Activated CD4-positive, alpha-beta T cell treated with anti-CD3 and anti-CD28 coated beads for 36 hours (primary cell): ENCODE measurements at regions of chr11 and their contacts with region 1.

Region 1: GRCh38 chr11:14643697-14644225 is at the start of gene PDE3B:
- DNase-seq: peak; percentile 88
- ATAC-seq: peak; percentile 76
- H3K4me3 Mint-ChIP-seq: peak within 1 kb of the TSS; percentile 75
- H3K27ac Mint-ChIP-seq: peak within 1 kb of the TSS; percentile 89
- H3K4me1 Mint-ChIP-seq: peaks cover 46% of the 10 kb centered on the region
- H3K27me3 Mint-ChIP-seq: no peaks in the 10 kb centered on the region
- total RNA-seq, gene PDE3B: 24.7 to 25.8 TPM

Region 2: GRCh38 chr11:14519917-14520746 is 123.6 kb before region 1 on chr11 and contains the start of gene PSMA1:
- CTCF ChIA-PET with region 1: no interaction called
- POLR2A ChIA-PET with region 1: interaction called, 7 read pairs
- intact Hi-C with region 1: loop called (anchors 1 kb)
- DNase-seq: peak; percentile 98
- ATAC-seq: peak; percentile 87
- H3K4me3 Mint-ChIP-seq: peak within 1 kb of the TSS; percentile 93
- H3K27ac Mint-ChIP-seq: peak within 1 kb of the TSS; percentile 95
- H3K4me1 Mint-ChIP-seq: peaks cover 25% of the 10 kb centered on the region
- H3K27me3 Mint-ChIP-seq: no peaks in the 10 kb centered on the region
- total RNA-seq, gene PSMA1: 231 to 330 TPM

Region 3: DNA sequence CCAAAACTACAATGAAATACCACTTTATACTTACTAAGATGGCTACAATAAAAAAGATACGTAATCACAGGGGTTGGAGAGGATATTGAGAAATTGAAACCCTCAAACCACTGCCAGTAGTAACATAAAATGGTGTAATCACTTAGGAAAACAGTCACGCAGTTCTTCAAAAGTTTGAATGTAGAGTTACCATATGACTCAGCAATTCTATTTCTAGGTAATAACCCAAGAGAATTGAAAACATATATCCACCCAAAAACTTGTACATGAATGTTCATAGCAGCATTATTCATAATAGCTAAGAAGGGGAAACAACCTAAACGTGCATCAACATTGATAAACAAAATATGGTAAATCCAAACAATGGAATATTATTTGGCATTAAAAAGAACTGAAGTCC is 99.2 kb before region 1 on chr11:
- CTCF ChIA-PET with region 1: interaction called, 11 read pairs
- POLR2A ChIA-PET with region 1: no interaction called
- intact Hi-C with region 1: loop called (anchors 1 kb)
- DNase-seq: no peak
- ATAC-seq: peak; percentile 79
- H3K4me3 Mint-ChIP-seq: no peak overlapping the region
- H3K27ac Mint-ChIP-seq: peak overlapping the region; percentile 72
- H3K4me1 Mint-ChIP-seq: peaks cover 40% of the 10 kb centered on the region
- H3K27me3 Mint-ChIP-seq: no peaks in the 10 kb centered on the region

Region 4: DNA sequence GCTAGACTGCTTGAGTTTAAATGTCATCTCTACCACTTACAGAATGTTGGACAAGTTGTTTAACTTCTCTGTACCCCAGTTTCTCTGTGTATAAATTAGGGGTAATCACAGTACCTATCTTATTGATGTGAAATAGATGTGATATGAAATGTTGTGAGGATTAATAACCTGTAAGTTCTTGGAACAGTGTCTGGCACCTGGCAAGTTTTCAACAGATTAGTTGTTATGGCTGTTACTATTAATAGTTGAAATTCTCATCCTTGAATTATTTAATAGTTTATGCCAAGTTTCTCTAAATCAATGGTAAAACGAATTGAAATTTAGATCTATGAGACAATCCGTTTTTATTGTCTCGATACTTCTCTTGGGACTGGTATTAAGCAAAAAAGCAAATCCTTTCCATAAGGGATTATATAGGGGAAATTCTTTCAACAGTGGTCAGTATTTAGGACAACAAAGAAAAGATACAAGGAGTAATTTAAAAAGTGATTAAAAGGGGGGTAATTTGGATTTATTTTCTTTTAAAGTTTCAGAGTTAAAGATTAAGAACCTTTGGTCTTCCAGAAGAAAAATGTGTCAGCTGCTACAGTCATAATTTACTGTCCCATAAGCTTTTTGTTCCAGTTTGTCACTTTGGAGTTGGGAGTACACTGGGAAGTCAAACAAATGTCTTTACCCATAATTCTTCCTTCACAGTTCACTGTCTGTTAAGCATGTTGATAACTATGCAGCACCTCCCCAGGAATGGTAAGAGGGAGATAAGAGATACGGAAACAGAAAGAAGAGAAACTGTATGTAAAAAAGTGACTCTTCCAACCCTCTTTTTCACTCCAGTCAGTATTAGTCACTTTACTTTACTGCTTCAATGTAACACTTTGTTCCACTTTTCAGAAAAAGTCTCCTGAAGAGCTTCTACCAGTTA is 13.0 kb after region 1 on chr11:
- CTCF ChIA-PET with region 1: interaction called, 10 read pairs
- POLR2A ChIA-PET with region 1: interaction called, 4 read pairs
- intact Hi-C with region 1: no loop called
- DNase-seq: no peak
- ATAC-seq: peak; percentile 81
- H3K4me3 Mint-ChIP-seq: no peak overlapping the region
- H3K27ac Mint-ChIP-seq: peak overlapping the region; percentile 47
- H3K4me1 Mint-ChIP-seq: peaks cover 41% of the 10 kb centered on the region
- H3K27me3 Mint-ChIP-seq: no peaks in the 10 kb centered on the region

Region 5: GRCh38 chr11:14764579-14765527 is 121.1 kb after region 1 on chr11:
- CTCF ChIA-PET with region 1: interaction called, 13 read pairs
- POLR2A ChIA-PET with region 1: interaction called, 6 read pairs
- intact Hi-C with region 1: loop called (anchors 1 kb)
- DNase-seq: peak; percentile 50
- ATAC-seq: peak; percentile 76
- H3K4me3 Mint-ChIP-seq: peak overlapping the region; percentile 62
- H3K27ac Mint-ChIP-seq: no peak overlapping the region
- H3K4me1 Mint-ChIP-seq: peaks cover 42% of the 10 kb centered on the region
- H3K27me3 Mint-ChIP-seq: no peaks in the 10 kb centered on the region

Region 6: DNA sequence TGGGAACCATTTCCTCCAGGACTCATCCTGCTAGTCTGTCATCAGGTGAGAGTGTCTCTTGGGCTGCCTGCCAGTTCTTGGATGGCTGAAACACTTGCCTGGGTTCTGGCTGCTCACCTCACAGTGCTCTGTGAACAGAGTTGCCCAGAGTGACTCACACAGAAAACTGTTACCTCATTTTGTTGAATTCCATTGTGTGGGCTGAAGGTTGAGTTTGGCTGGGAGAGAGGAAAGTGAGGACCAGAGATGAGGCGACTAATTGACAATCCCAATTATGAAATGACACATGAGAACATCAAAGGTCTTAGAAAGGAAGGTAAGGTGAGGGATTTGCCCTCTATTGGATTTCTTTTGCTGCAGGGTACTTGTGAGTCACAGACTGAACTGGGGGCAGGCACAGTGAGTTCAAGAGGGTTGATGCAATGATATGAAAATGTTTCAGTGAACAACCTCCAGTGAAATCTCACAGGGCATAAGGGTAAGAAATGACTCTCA is 409.5 kb after region 1 on chr11:
- CTCF ChIA-PET with region 1: no interaction called
- POLR2A ChIA-PET with region 1: no interaction called
- intact Hi-C with region 1: loop called in 1 of 2 experiments (anchors 10 kb)
- DNase-seq: peak; percentile 68
- ATAC-seq: peak; percentile 87
- H3K4me3 Mint-ChIP-seq: no peak overlapping the region
- H3K27ac Mint-ChIP-seq: peak overlapping the region; percentile 84
- H3K4me1 Mint-ChIP-seq: peaks cover 28% of the 10 kb centered on the region
- H3K27me3 Mint-ChIP-seq: peaks cover 5% of the 10 kb centered on the region